Aorta (tissue), 5 donors: ENCODE measurements at regions of chr12 and their contacts with region 1.

Region 1: DNA sequence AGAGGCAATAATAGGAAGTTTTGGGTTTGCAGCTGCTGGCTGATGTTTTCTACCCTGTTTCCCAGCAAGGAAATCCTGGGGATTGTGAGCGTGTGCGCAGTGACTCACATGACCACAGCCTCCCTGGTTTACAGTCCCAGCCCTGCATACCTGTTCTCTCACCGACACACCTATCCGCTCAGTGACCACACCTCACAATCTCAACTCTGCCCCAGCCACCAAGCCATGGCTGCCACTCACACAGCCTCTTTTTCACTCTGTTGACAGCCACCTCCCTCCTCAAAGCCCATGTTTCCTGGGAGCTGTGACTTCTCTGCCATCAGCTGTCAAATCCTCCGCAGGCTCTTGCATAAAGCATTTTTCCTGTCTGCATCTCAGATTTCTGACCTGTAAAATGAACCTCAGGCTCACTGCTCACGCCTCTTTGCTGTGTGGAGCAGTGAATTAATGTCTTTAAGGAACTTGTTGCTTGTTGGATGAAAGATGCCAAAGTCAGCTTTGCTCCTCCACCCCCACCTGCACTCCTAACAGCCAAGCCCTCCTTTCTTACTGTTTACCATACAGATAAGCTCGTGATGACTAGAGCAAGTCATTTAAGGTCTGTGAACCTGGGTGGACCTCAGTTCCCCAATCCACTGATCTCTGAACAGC is 43.5 kb downstream of the B4GALNT3 start:
- DNase-seq: no peak
- ATAC-seq: no peak
- H3K4me3 ChIP-seq: no peak overlapping the region
- H3K27ac ChIP-seq: peak overlapping the region in 1 of 2 donors; percentile 3
- H3K4me1 ChIP-seq: peaks cover 0 to 2% of the 10 kb centered on the region in 2 donors
- H3K27me3 ChIP-seq: no peaks in the 10 kb centered on the region

Region 2: GRCh38 chr12:366820-367219 is 136.4 kb before region 1 on chr12:
- intact Hi-C with region 1: no loop called
- DNase-seq: no peak
- ATAC-seq: no peak
- H3K4me3 ChIP-seq: no peak overlapping the region
- H3K27ac ChIP-seq: no peak overlapping the region
- H3K4me1 ChIP-seq: no peaks in the 10 kb centered on the region
- H3K27me3 ChIP-seq: no peaks in the 10 kb centered on the region

Region 3: DNA sequence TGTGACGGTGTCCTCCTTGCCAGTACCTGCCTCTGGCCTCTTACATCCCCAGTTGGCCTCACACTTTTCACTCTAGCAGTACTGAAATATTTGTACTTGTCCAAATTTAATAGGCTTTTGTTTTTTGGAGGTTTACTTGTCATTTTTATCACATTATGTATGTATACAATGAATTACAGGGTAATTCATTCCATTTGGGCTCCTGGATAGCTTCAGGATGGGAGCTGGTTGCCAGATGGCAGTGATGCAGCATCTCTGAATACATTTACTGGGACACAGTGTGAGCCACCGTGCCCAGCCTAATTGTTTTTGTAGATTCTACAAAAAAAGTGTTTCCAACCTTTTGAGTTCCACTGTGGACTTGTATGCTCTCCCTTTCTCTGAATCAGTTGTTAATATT is 88.4 kb before region 1 on chr12:
- intact Hi-C with region 1: no loop called
- DNase-seq: no peak
- ATAC-seq: no peak
- H3K4me3 ChIP-seq: no peak overlapping the region
- H3K27ac ChIP-seq: no peak overlapping the region
- H3K4me1 ChIP-seq: no peaks in the 10 kb centered on the region
- H3K27me3 ChIP-seq: no peaks in the 10 kb centered on the region

Region 4: DNA sequence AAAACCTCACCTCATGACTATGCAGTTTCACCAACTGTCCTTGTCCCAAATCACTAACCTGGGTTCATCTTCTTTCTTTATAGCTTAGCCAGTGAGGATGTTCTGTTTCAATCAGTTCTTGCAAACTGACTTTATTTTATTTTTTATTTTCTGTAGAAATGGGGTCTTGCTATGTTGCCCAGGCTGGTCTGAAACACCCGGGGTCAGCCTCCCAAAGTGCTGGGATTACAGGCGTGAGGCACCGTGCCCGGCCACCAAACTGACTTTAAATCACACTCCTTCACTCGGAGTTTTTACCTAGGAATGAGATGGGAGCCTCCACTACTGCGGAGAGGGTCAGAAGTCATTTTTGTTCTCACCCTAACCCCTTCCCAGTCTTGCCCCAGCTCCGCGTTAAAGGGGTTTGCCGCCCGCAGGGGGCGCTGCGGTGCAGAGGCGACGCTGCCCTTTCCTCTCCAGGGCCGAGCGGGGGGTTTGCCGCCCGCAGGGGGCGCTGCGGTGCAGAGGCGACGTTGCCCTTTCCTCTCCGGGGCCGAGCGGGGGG is 50.5 kb before region 1 on chr12:
- intact Hi-C with region 1: loop called (anchors 2 to 5 kb)
- DNase-seq: peak in 1 of 2 donors; percentile 80
- ATAC-seq: no peak
- H3K4me3 ChIP-seq: no peak overlapping the region
- H3K27ac ChIP-seq: no peak overlapping the region
- H3K4me1 ChIP-seq: no peaks in the 10 kb centered on the region
- H3K27me3 ChIP-seq: no peaks in the 10 kb centered on the region

Region 5: DNA sequence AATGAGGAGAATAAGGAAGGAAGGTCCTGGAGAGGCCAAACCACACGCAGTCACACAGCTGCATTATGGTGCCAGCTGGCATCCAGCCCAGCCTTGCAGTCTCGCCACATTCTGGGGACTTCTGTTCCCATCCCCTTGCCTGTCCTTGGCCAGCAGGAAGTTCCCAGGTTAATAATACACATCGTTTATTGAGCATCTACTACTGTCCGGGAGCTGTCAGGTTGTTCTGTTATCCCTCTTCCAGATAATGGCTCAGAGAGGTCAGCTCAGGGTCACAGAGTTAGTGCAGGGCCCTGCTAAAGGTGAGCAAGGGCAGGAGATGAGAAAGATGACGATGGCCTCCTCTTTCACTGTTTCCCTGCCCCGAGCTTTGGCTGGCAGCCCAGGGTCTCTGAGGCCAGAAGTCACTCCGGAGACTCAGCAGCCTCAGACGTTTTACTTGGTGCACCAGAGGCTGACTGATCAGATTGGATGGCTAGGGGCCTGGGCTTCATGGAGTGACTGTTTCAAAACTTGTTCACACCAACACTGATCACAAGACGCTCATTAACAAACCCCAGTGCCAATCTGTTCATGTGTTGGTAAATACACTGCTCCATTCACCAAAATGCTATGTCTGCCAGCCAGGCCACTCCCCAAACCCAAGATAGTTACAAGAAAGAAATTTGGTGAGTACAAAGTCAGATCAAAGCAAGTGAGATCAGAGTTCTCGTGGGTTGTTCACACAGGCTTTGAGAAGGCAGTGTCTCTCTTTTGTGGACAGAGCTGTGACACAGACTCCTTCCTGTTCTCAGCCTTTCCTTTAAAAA is 35.7 kb after region 1 on chr12:
- intact Hi-C with region 1: loop called in 1 of 2 experiments (anchors 5 kb)
- DNase-seq: peak; percentile 86 to 87
- ATAC-seq: no peak
- H3K4me3 ChIP-seq: no peak overlapping the region
- H3K27ac ChIP-seq: no peak overlapping the region
- H3K4me1 ChIP-seq: peaks cover 0 to 10% of the 10 kb centered on the region in 2 donors
- H3K27me3 ChIP-seq: no peaks in the 10 kb centered on the region

Region 6: GRCh38 chr12:546921-547845 is 43.9 kb after region 1 on chr12:
- intact Hi-C with region 1: loop called in 1 of 2 experiments (anchors 5 kb)
- DNase-seq: peak; percentile 79 to 92
- ATAC-seq: peak; percentile 90
- H3K4me3 ChIP-seq: no peak overlapping the region
- H3K27ac ChIP-seq: no peak overlapping the region
- H3K4me1 ChIP-seq: no peaks in the 10 kb centered on the region
- H3K27me3 ChIP-seq: no peaks in the 10 kb centered on the region

Region 7: DNA sequence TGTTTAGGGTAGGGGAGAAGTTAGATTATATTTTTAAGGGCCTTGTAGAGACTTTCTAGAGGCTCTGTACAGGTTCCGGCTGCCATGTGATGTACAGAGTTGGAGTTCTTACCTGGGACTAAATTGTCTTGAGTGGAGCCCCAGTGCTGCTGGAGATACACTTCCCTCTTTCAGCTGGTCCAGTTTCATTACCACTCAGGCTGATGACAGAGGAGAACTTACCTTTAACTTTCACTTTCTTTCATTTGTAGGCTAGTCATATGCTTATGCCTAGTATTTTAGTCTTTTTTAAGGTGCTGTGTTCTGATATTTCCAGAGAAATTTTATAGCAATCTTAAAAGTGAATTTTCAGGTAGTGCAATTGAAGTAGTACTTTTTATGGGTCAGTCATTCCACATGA is 605.0 kb after region 1 on chr12:
- intact Hi-C with region 1: no loop called
- DNase-seq: no peak
- ATAC-seq: no peak
- H3K4me3 ChIP-seq: no peak overlapping the region
- H3K27ac ChIP-seq: no peak overlapping the region
- H3K4me1 ChIP-seq: peaks cover 2 to 7% of the 10 kb centered on the region in 2 donors
- H3K27me3 ChIP-seq: no peaks in the 10 kb centered on the region